ENCODE measurements at regions of chr5 and their contacts with region 1.

Region 1: DNA sequence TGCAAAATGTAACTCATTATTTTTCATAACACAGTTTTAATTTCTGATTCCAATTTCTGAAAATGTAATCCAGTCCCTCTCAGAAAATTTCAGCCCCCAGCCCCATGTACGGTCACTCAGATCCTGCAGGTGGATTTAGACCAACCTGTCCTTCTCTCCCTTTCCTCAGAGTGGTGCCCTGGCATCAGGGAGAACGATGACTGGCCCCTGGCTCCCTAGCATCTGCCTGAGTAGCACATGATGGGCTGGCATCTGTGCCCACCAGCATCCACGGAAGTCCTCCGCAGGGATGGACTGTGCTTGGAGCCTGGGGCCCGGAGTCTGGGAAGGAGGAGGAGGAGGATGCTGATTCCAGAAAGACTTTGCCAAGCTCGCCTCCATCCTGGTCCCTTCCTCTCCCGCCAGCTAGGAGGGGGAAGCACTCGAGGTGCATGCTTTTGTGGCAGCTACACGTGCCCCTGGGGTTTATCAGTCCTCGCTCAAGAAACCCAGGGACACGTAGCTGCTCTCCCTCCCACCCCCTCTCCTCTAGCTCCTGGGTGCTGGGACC is 54.4 kb upstream of the RUFY1 start:
- DNase-seq: no peak
- ATAC-seq: no peak
- H3K4me3 ChIP-seq: no peak overlapping the region
- H3K27ac ChIP-seq: no peak overlapping the region
- H3K4me1 ChIP-seq: no peaks in the 10 kb centered on the region
- H3K27me3 ChIP-seq: peaks cover 0 to 10% (median 2%) of the 10 kb centered on the region in 3 donors
- CTCF ChIP-seq: no peak

Region 2: GRCh38 chr5:179166886-179167841 is 328.8 kb before region 1 on chr5:
- intact Hi-C with region 1: loop called (anchors 1 kb)
- DNase-seq: peak; percentile 58 to 68
- ATAC-seq: peak; percentile 61 to 92 (median 82)
- H3K4me3 ChIP-seq: peak overlapping the region; percentile 49
- H3K27ac ChIP-seq: no peak overlapping the region
- H3K4me1 ChIP-seq: no peaks in the 10 kb centered on the region
- H3K27me3 ChIP-seq: peaks cover 0 to under 1% (median 0%) of the 10 kb centered on the region in 3 donors
- CTCF ChIP-seq: peak; percentile 99

Region 3: DNA sequence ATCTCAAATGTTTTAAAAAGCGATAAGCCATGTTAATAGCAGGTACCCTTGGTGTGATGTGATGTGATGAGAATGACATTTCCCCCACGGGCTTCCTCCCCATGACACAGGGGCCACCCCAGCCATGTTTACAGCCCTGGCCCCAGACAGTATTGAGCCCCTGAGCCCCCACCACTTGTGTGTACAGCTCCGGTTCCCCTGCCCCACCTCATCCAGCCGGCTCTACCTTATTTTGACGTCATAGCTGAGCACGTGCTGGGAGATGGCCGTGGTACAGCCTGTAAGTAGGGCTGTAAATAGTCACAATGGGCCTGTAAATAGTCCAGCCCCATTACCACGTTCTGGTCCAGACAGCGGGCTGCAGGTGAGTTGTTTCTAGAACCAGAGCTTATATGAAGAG is 152.4 kb after region 1 on chr5:
- intact Hi-C with region 1: no loop called
- DNase-seq: no peak
- ATAC-seq: no peak
- H3K4me3 ChIP-seq: no peak overlapping the region
- H3K27ac ChIP-seq: no peak overlapping the region
- H3K4me1 ChIP-seq: no peaks in the 10 kb centered on the region
- H3K27me3 ChIP-seq: no peaks in the 10 kb centered on the region
- CTCF ChIP-seq: no peak